Mammary epithelial cell (primary cell): ENCODE measurements at regions of chr3 and their contacts with region 1.

Region 1: GRCh38 chr3:57755668-57756527 is at the start of gene SLMAP:
- DNase-seq: peak; percentile 97
- H3K4me3 ChIP-seq: peak within 1 kb of the TSS; percentile 65 to 94 (median 77)
- H3K27ac ChIP-seq: peak within 1 kb of the TSS; percentile 97
- H3K4me1 ChIP-seq: peaks cover 41% of the 10 kb centered on the region
- H3K27me3 ChIP-seq: no peaks in the 10 kb centered on the region
- CTCF ChIP-seq: no peak
- total RNA-seq, gene SLMAP: 96.4 to 126 TPM

Region 2: GRCh38 chr3:56923521-56924224 is 832.2 kb before region 1 on chr3:
- CTCF ChIA-PET with region 1: no interaction called
- dilution Hi-C with region 1: no loop called
- in situ Hi-C with region 1: no loop called
- intact Hi-C with region 1: no loop called
- DNase-seq: peak; percentile 59
- H3K4me3 ChIP-seq: no peak overlapping the region
- H3K27ac ChIP-seq: no peak overlapping the region
- H3K4me1 ChIP-seq: peaks cover 32% of the 10 kb centered on the region
- H3K27me3 ChIP-seq: no peaks in the 10 kb centered on the region
- CTCF ChIP-seq: no peak

Region 3: GRCh38 chr3:57597122-57597923 is 158.6 kb before region 1 on chr3 and contains the start of gene ARF4:
- CTCF ChIA-PET with region 1: no interaction called
- dilution Hi-C with region 1: no loop called
- in situ Hi-C with region 1: no loop called
- intact Hi-C with region 1: loop called (anchors 2 kb)
- DNase-seq: peak; percentile 100
- H3K4me3 ChIP-seq: peak within 1 kb of the TSS; percentile 85 to 98 (median 97)
- H3K27ac ChIP-seq: peak within 1 kb of the TSS; percentile 99
- H3K4me1 ChIP-seq: peaks cover 29% of the 10 kb centered on the region
- H3K27me3 ChIP-seq: no peaks in the 10 kb centered on the region
- CTCF ChIP-seq: peak in 1 of 2 donors; percentile 24
- total RNA-seq, gene ARF4: 202 to 208 TPM

Region 4: DNA sequence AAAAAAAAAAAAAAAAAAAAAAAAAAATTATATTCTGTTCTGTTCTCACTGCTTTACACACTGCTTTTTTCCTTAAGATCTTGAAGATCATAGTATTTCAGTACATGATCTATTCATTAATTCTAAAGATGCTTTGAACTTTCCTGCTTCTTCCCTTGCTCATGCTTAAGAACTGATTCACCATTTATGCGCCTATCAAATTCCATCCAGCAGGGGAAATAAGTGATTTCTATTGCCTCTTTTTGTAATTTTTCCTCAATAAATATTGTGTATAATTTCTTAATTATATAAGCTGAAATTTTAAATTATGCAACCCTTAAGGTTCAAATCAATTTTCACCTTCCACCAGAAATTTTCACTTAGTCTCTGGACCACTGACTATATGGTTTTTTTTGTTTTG is 73.6 kb before region 1 on chr3:
- CTCF ChIA-PET with region 1: no interaction called
- dilution Hi-C with region 1: loop called (anchors 10 kb)
- in situ Hi-C with region 1: no loop called
- intact Hi-C with region 1: no loop called
- DNase-seq: no peak
- H3K4me3 ChIP-seq: no peak overlapping the region
- H3K27ac ChIP-seq: no peak overlapping the region
- H3K4me1 ChIP-seq: no peaks in the 10 kb centered on the region
- H3K27me3 ChIP-seq: no peaks in the 10 kb centered on the region
- CTCF ChIP-seq: peak; percentile 22 to 43

Region 5: DNA sequence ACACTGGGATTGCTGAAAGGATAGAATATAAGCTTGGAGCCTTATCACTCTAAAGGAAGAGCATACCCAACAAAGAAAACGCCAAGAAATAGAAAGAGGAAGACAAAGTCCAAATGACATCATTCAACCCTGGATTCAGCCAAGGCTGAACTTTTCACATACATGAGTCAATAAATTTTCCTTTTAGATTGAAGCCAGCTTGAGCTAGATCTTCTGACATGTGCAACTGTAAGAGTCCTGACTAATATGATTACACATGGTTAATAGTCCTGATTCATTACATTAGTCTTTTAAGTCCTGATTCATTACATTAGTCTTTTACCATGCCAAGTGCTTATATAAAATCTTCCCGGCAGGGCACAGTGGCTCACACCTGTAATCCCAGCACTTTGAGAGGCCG is 49.4 kb before region 1 on chr3:
- CTCF ChIA-PET with region 1: no interaction called
- dilution Hi-C with region 1: loop called (anchors 5 kb)
- in situ Hi-C with region 1: no loop called
- intact Hi-C with region 1: loop called (anchors 1 kb)
- DNase-seq: peak; percentile 94
- H3K4me3 ChIP-seq: no peak overlapping the region
- H3K27ac ChIP-seq: peak overlapping the region; percentile 19
- H3K4me1 ChIP-seq: peaks cover 18% of the 10 kb centered on the region
- H3K27me3 ChIP-seq: no peaks in the 10 kb centered on the region
- CTCF ChIP-seq: no peak

Region 6: GRCh38 chr3:57826245-57826951 is 70.5 kb after region 1 on chr3:
- CTCF ChIA-PET with region 1: interaction called, 5 read pairs
- dilution Hi-C with region 1: no loop called
- in situ Hi-C with region 1: no loop called
- intact Hi-C with region 1: loop called (anchors 1 kb)
- DNase-seq: no peak
- H3K4me3 ChIP-seq: no peak overlapping the region
- H3K27ac ChIP-seq: no peak overlapping the region
- H3K4me1 ChIP-seq: peaks cover 9% of the 10 kb centered on the region
- H3K27me3 ChIP-seq: no peaks in the 10 kb centered on the region
- CTCF ChIP-seq: peak in 1 of 2 donors; percentile 28